Prostate gland (tissue), 2 donors: ENCODE measurements at regions of chr7 and their contacts with region 1.

Region 1: DNA sequence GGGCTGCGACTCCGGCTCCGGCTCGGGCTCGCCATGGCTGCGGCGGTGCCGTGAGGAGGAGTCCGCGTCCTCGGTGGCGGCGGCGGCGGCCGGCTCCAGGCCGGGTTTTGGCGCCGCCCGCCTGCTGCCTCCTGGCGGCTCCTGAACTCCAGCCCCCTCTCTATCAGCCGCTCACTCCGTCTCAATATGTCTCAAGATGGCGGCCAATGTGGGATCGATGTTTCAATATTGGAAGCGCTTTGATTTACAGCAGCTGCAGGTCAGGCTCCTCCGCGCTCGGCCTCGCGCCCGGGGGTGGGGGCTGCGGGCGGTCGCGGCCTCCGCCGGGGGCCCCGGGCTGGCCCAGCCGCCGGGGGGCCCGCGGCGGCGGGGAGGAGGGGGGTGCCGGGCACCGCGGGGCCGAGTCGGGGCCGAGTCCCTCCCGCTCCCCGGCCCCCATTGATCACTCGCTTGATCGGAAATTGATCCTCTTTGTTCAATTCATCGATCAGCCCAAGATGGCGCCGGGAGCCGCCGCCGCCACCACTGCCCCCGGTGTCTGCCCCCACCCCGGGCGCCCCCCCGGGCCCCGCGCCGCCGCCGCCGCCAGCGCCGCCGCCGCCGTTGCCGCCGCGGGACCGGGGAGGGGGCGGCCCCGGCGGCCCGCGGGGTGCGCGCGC is 1.5 kb upstream of the CUX1 start:
- DNase-seq: peak; percentile 57
- H3K4me3 ChIP-seq: peak overlapping the region; percentile 63 to 68
- H3K27ac ChIP-seq: peak overlapping the region; percentile 79 to 83
- H3K4me1 ChIP-seq: no peaks in the 10 kb centered on the region
- H3K27me3 ChIP-seq: no peaks in the 10 kb centered on the region
- CTCF ChIP-seq: peak in 1 of 4 experiments; percentile 32
- POLR2A ChIP-seq: no peak

Region 2: DNA sequence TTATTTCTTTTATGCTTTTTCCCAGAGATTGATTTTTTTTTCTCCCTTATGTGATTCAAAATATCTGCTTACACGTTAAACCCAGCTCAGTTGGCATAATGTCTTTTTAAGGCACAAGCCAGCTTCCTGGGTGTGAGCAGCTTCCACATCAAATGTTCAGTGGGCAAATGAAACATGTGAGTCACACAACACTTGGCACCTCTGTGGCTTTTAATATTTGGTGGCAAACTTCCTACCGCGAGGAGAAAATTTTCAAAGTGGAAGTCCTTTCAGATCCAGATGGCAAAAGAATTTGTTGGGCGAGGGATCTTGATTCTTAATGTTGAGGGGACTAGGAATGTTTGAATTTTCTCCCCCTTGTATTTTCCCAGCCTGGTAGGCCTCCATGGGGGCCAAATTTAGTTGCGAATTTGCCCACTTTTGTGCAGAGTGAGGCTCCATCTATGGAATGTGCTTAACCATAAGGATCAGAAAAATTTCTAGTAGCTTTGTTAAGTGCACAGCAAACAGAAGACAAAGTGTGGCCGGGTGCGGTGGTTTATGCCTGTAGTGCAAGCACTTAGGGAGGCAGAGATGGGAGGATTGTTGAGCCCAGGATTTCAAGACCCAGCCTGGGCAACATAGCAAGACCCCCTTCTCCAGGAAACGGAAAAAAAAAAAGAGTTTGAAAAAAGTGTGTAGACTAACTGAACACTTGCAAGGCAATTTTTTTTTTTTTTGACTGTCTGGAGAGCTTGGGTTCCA is 32.4 kb after region 1 on chr7:
- intact Hi-C with region 1: no loop called
- DNase-seq: no peak
- H3K4me3 ChIP-seq: no peak overlapping the region
- H3K27ac ChIP-seq: no peak overlapping the region
- H3K4me1 ChIP-seq: no peaks in the 10 kb centered on the region
- H3K27me3 ChIP-seq: no peaks in the 10 kb centered on the region
- CTCF ChIP-seq: no peak
- POLR2A ChIP-seq: no peak

Region 3: GRCh38 chr7:101891936-101892640 is 76.1 kb after region 1 on chr7:
- intact Hi-C with region 1: loop called (anchors 10 kb)
- DNase-seq: no peak
- H3K4me3 ChIP-seq: no peak overlapping the region
- H3K27ac ChIP-seq: no peak overlapping the region
- H3K4me1 ChIP-seq: no peaks in the 10 kb centered on the region
- H3K27me3 ChIP-seq: no peaks in the 10 kb centered on the region
- CTCF ChIP-seq: no peak
- POLR2A ChIP-seq: no peak

Region 4: DNA sequence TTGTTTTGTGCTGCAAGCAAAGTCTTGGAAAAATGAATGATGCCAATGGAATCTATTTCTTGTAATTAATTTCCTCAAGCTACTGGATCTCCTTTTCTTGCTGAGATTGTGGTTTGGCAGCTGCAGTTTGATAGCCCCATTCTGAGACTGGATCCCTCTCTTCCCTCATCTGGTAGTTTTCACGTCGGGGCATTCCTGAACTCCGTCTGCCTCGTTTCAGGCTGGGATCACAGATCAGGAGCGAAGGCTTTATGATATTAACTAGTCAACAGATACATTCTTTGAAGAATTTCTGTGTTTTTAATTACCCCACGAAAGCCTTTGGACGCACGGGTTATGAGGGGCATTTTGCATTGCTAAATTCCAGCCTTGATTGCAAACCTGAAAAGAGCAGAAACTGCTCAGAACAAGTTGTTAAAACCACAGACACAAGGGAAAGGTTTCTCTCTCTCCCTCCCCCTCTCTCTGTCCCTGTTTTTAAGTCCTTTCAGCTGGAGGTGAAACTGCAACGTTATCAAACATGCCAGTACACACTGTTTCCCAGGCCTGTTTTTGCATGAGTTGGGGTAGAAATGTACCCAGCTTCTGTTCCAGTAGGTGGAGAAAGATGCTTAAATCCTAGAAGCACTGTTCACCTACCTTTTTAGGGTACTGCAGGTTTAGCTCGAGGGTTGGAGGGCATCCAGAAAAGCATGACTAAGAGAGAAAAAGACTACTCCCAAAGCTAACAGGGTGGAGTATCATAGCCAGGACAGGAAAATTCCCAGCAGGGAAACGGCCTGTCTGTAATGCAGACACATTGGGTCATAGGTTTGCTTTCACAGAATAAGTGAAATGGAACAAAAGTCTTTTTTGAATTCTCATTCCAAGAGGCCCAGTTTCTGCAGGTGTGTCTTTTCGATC is 125.8 kb after region 1 on chr7:
- intact Hi-C with region 1: no loop called
- DNase-seq: peak; percentile 85
- H3K4me3 ChIP-seq: no peak overlapping the region
- H3K27ac ChIP-seq: peak overlapping the region; percentile 75 to 84
- H3K4me1 ChIP-seq: peaks cover 17% of the 10 kb centered on the region
- H3K27me3 ChIP-seq: no peaks in the 10 kb centered on the region
- CTCF ChIP-seq: no peak
- POLR2A ChIP-seq: no peak

Region 5: DNA sequence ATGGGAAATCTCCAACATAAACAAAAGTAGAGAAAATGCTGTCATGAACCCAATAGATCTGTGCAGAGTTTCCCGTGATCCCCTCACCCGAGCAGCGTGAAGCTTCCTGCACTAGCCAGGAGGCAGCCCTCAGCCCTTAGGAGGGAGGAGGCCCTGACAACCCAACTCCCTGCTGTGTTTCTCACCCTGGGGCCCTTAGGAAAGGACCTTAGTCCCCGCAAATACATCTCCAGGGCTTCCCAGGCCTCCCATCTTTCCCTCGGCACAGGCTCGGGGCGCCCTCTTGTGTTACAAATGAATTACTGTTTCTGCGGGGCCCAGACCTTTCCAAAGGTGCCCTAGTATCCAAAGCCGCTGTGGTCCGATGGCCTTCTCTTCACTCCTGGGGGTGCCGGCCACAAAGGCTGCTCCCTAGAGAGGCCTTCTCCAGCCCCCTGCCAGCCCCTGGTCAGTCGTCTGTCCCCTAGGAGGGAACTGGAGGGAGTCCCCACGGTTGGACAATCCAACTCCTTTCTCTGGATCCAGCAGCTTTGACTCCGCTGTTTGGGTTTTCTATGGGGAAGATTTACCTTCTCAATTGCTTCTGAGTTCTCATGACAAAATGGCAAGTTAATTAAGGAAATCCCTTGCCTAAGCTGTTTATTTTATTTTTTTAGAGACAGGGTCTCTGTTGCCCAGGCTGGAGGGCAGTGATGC is 420.8 kb after region 1 on chr7:
- intact Hi-C with region 1: loop called (anchors 5 kb)
- DNase-seq: peak; percentile 49
- H3K4me3 ChIP-seq: no peak overlapping the region
- H3K27ac ChIP-seq: no peak overlapping the region
- H3K4me1 ChIP-seq: no peaks in the 10 kb centered on the region
- H3K27me3 ChIP-seq: no peaks in the 10 kb centered on the region
- CTCF ChIP-seq: peak; percentile 53 to 82 (median 80)
- POLR2A ChIP-seq: no peak